Heart left ventricle (tissue), 16 donors: ENCODE measurements at regions of chr9 and their contacts with region 1.

Region 1: GRCh38 chr9:25094518-25094917 is 548.8 kb upstream of the IZUMO3 start:
- DNase-seq: no peak
- ATAC-seq: no peak
- H3K4me3 ChIP-seq: no peak overlapping the region
- H3K27ac ChIP-seq: no peak overlapping the region
- H3K4me1 ChIP-seq: no peaks in the 10 kb centered on the region
- H3K27me3 ChIP-seq: no peaks in the 10 kb centered on the region
- CTCF ChIP-seq: no peak
- POLR2A ChIP-seq: no peak

Region 2: GRCh38 chr9:25025156-25025555 is 69.4 kb before region 1 on chr9:
- intact Hi-C with region 1: loop called in 1 of 10 experiments (anchors 10 kb)
- DNase-seq: no peak
- ATAC-seq: no peak
- H3K4me3 ChIP-seq: no peak overlapping the region
- H3K27ac ChIP-seq: no peak overlapping the region
- H3K4me1 ChIP-seq: no peaks in the 10 kb centered on the region
- H3K27me3 ChIP-seq: no peaks in the 10 kb centered on the region
- CTCF ChIP-seq: no peak
- POLR2A ChIP-seq: no peak